ENCODE measurements at regions of chr16 and their contacts with region 1.

Region 1: DNA sequence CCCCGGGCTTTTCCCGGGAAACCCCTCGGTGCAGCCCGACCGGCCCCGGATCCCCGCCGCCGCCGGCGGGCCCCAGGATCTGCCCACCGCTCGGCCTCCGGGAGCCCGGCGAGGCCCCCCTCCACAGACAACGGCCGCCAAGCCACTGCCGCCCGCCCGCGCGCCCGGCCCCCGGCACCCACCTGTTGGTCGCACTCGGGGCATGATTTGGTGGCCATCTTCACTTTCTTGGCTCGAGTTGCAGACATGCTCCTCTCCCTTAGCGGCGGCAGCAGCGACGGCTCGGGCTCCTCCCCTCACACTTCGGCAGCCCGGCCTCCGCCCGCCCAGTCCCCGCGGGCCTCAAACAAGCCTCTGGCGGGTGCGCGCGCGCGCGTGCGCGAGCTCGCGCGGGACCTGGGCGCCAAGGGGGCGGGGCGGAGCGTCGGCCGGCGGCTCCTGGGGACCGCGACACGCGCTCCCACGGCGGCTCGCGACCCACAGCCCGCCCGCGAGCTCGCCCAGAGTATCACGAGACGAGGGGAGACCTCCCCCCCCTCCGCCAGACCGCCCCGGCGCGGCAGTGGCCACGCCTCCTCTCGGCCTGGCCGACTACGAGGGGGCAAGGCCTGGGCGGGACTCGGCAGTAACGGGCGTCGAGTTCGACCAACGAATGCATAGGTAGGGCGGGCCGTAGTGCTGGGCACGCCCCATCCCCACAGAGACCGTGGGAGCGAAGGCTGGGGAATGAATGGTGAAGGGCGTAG is at the start of gene C16orf87:
- DNase-seq: peak; percentile 92 to 95 (median 93)
- H3K4me3 ChIP-seq: peak within 1 kb of the TSS; percentile 74 to 84
- H3K4me3 Mint-ChIP-seq: peak within 1 kb of the TSS; percentile 92 to 100 (median 94)
- H3K27ac ChIP-seq: peak within 1 kb of the TSS; percentile 71
- H3K27ac Mint-ChIP-seq: peak within 1 kb of the TSS; percentile 89 to 99 (median 97)
- H3K4me1 ChIP-seq: peaks cover 41% of the 10 kb centered on the region
- H3K4me1 Mint-ChIP-seq: peaks cover 18 to 37% (median 25%) of the 10 kb centered on the region in 4 donors
- H3K27me3 ChIP-seq: no peaks in the 10 kb centered on the region
- H3K27me3 Mint-ChIP-seq: no peaks in the 10 kb centered on the region
- total RNA-seq, gene C16orf87: 5.8 to 6.2 TPM

Region 2: DNA sequence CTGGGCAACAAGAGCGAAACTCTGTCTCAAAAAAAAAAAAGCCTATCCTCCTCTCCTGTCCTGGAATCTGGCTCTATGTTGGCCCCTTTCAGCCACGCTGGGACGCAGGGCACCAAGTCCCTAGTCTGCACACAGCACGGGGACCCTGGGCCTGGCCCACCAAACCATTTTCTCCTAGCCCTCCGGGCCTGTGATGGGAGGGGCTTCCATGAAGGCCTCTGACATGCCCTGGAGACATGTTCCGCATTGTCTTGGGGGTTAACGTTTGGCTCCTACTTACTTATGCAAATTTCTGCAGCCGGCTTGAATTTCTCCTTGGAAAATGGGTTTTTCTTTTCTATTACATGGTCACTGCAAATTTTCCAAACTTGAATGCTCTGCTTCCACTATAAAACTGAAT is 40.5 kb after region 1 on chr16:
- CTCF ChIA-PET with region 1: no interaction called
- POLR2A ChIA-PET with region 1: no interaction called
- intact Hi-C with region 1: no loop called
- DNase-seq: no peak
- H3K4me3 ChIP-seq: no peak overlapping the region
- H3K4me3 Mint-ChIP-seq: no peak overlapping the region
- H3K27ac ChIP-seq: no peak overlapping the region
- H3K27ac Mint-ChIP-seq: no peak overlapping the region
- H3K4me1 ChIP-seq: no peaks in the 10 kb centered on the region
- H3K4me1 Mint-ChIP-seq: no peaks in the 10 kb centered on the region
- H3K27me3 ChIP-seq: no peaks in the 10 kb centered on the region
- H3K27me3 Mint-ChIP-seq: peaks cover 0 to 3% of the 10 kb centered on the region in 2 donors

Region 3: DNA sequence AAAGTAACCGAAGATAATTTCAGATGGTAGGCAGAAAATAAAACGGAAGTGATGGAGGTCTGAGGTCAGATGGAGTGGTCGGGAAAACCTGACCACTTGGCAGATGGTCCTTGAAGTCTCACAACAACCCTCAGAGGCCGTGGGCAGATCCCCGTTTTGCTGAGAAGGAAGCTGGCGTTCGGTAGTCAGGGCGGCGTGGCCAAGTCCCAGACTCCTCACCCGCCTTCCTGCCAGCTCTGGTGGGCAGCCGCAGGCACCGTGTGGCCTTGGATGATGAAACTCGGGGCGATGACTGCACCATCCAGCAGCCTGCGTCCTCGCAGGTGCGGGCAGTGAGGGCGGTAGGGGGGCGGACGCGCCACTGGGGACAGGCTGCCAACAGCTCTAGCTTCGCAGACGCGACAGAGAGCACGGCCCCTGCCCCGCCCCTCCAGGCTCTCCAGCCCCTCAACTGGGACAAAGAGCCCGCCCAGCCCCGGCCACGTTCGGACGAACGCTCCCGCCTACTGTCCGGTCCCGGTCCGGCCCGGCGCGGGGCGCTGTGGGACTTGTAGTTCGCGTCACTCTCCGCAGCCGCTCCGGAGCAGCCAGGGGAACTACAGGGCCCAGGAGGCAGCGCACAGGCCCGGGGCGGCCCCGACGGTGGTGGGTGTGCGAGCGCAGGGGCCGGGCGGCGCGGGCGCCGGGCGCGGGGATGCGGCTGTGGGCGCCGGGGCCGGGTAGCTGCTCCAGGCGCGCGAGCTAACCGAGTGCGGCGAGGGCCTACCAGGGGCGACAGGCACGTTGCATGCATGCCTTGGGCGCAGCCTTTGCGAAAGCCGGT is 52.8 kb after region 1 on chr16 and contains the start of gene GPT2:
- CTCF ChIA-PET with region 1: no interaction called
- POLR2A ChIA-PET with region 1: interaction called, 3 read pairs
- intact Hi-C with region 1: loop called (anchors 1 kb)
- DNase-seq: peak; percentile 57 to 69 (median 64)
- H3K4me3 ChIP-seq: peak within 1 kb of the TSS; percentile 49 to 66
- H3K4me3 Mint-ChIP-seq: peak within 1 kb of the TSS; percentile 81 to 98 (median 88)
- H3K27ac ChIP-seq: no peak within 1 kb of the TSS
- H3K27ac Mint-ChIP-seq: peak within 1 kb of the TSS in 4 of 7 donors; percentile 7 to 77 (median 66)
- H3K4me1 ChIP-seq: peaks cover 10% of the 10 kb centered on the region
- H3K4me1 Mint-ChIP-seq: peaks cover 8 to 23% (median 15%) of the 10 kb centered on the region in 4 donors
- H3K27me3 ChIP-seq: no peaks in the 10 kb centered on the region
- H3K27me3 Mint-ChIP-seq: peaks cover 3 to 5% of the 10 kb centered on the region in 2 donors
- total RNA-seq, gene GPT2: 1.2 to 1.5 TPM

Measured in CD4-positive, alpha-beta memory T cell (primary cell).